ENCODE measurements at regions of chr18 and their contacts with region 1.

Region 1: GRCh38 chr18:64191069-64191468 is 42.2 kb upstream of the LINC00305 start:
- DNase-seq: no peak
- H3K4me3 ChIP-seq: no peak overlapping the region
- H3K27ac ChIP-seq: no peak overlapping the region
- H3K4me1 ChIP-seq: no peaks in the 10 kb centered on the region
- H3K27me3 ChIP-seq: no peaks in the 10 kb centered on the region
- CTCF ChIP-seq: no peak
- POLR2A ChIP-seq: no peak

Region 2: DNA sequence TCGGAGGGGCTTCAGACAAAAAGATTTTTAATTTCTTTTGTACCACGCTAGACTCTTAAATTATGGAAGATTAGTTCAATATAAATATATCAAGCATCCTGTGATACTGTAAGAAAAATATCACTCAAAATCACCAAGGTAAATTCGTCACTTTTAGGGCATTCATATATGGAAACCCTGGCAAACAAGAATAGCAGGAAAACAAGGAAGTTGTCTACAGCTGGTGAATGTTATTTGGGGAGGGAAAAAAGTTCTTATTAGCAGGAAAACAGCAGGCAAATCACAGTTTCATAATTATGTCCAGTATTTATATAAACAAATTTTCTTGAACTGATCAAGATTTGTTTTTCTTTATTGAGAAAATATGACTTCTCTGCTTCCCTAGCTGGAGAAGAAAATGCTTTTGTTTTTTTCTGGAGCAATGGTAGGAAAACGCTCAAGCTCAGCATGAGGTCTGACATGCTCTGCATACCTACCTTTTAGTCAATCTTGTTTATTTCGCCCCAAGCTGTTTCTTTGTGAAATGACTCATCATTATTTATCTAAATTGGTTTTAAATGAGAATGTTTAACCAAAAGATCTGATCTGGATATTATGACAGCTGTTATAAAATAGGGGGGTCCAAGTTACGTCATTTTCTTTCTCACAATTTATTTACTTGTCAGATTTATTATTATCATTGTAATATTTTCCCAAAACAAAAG is 56.9 kb before region 1 on chr18:
- CTCF ChIA-PET with region 1: no interaction called
- POLR2A ChIA-PET with region 1: no interaction called
- dilution Hi-C with region 1: no loop called
- intact Hi-C with region 1: loop called (anchors 10 kb)
- DNase-seq: no peak
- H3K4me3 ChIP-seq: no peak overlapping the region
- H3K27ac ChIP-seq: no peak overlapping the region
- H3K4me1 ChIP-seq: no peaks in the 10 kb centered on the region
- H3K27me3 ChIP-seq: no peaks in the 10 kb centered on the region
- CTCF ChIP-seq: no peak
- POLR2A ChIP-seq: no peak

Measured in endothelial cell of umbilical vein (primary cell).